Activated CD4-positive, alpha-beta T cell treated with anti-CD3 and anti-CD28 coated beads for 36 hours (primary cell): ENCODE measurements at regions of chr3 and their contacts with region 1.

Region 1: GRCh38 chr3:171491361-171491760 is 31.2 kb upstream of the TNIK start:
- DNase-seq: no peak
- ATAC-seq: peak; percentile 57
- H3K4me3 Mint-ChIP-seq: peak overlapping the region; percentile 60
- H3K27ac Mint-ChIP-seq: peak overlapping the region; percentile 88
- H3K4me1 Mint-ChIP-seq: peaks cover 47% of the 10 kb centered on the region
- H3K27me3 Mint-ChIP-seq: no peaks in the 10 kb centered on the region

Region 2: DNA sequence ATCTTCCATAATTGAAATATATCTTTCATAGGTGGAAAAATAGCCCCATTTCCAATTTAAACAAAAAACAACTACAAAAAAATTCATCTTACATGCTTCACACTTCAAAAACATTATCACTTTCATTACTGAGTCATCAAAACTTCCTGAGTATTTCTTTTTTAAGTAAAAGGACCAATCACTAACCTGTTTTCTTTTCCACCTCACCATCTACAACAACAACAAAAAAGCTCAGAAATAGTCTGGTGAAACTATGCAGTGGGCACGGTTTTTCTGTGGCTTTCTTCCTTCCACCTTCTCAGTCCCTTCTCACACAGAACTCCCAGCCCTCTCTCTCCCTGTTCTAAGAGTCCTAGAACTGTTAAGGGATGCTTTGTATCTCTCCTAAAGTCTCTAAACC is 10.8 kb before region 1 on chr3:
- CTCF ChIA-PET with region 1: interaction called, 3 read pairs
- POLR2A ChIA-PET with region 1: no interaction called
- intact Hi-C with region 1: loop called (anchors 1 kb)
- DNase-seq: no peak
- ATAC-seq: peak; percentile 82
- H3K4me3 Mint-ChIP-seq: peak overlapping the region; percentile 0
- H3K27ac Mint-ChIP-seq: peak overlapping the region; percentile 59
- H3K4me1 Mint-ChIP-seq: peaks cover 15% of the 10 kb centered on the region
- H3K27me3 Mint-ChIP-seq: no peaks in the 10 kb centered on the region

Region 3: GRCh38 chr3:171561596-171562323 is 70.4 kb after region 1 on chr3:
- CTCF ChIA-PET with region 1: interaction called, 3 read pairs
- POLR2A ChIA-PET with region 1: no interaction called
- intact Hi-C with region 1: loop called in 1 of 2 experiments (anchors 5 kb)
- DNase-seq: peak; percentile 17
- ATAC-seq: peak; percentile 73
- H3K4me3 Mint-ChIP-seq: peak overlapping the region; percentile 58
- H3K27ac Mint-ChIP-seq: peak overlapping the region; percentile 94
- H3K4me1 Mint-ChIP-seq: peaks cover 36% of the 10 kb centered on the region
- H3K27me3 Mint-ChIP-seq: no peaks in the 10 kb centered on the region